Mucosa of descending colon (tissue), 3 donors: ENCODE measurements at regions of chr14 and their contacts with region 1.

Region 1: GRCh38 chr14:33914676-33915516 is 36.0 kb downstream of the EGLN3 start:
- DNase-seq: no peak
- ATAC-seq: peak; percentile 84
- H3K4me3 ChIP-seq: no peak overlapping the region
- H3K4me1 ChIP-seq: peaks cover 3% of the 10 kb centered on the region
- CTCF ChIP-seq: no peak

Region 2: DNA sequence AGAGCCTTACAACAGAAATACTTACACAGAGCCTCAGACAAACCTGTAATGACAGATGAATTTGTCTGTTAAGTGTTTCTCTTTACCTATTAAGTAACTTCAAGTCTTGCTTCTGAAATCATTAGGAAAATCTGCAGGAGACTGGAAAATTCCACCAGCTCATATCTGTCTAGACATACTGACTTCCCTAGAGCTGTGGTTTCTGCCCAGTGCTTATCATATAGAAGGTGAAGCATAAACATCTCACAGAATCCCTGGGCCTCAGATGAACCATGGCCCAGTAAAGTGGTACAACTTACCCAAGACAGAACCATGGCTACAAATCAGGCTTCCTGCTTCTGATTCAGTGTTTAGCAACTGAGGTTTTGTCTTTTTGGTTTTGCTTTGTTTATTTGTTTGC is 55.6 kb before region 1 on chr14:
- intact Hi-C with region 1: loop called in 1 of 2 experiments (anchors 10 kb)
- DNase-seq: no peak
- ATAC-seq: no peak
- H3K4me3 ChIP-seq: no peak overlapping the region
- H3K4me1 ChIP-seq: no peaks in the 10 kb centered on the region
- CTCF ChIP-seq: no peak